ENCODE measurements at regions of chr4 and their contacts with region 1.

Region 1: DNA sequence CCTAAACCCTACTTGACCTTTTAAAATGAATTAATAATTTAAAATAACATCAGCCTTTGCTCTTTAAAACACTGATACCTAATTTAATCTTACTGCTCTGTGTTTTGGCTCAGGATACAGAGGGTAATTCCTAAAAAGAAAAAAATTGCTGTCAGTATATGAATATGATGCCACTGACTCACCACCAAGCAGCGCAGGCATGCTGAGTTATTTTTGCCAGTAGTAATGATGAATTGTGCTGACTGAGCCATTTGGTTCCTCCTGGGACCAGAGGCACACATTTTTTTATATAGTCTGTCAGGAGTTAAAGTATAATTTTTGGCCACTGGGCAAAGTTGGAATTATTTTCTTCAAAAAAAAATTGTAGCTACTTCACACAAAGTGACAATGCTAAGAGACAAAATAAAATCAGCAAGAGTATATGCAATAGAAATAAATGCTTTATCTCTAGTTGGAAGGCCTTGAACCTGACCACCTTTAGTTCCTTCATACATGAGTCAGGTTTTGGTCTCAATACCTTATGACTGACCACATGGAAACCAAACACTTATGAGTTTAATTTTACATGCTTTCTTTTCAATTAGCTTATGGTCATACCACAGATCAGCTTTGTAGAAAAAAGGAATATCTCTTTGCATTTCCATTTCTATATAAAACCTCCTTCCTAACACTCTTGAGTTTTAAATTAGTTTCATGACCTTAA is 115.1 kb downstream of the PPP3CA start:
- DNase-seq: peak; percentile 83
- H3K4me3 Mint-ChIP-seq: no peak overlapping the region
- H3K27ac Mint-ChIP-seq: peak overlapping the region; percentile 60
- H3K4me1 Mint-ChIP-seq: peaks cover 37% of the 10 kb centered on the region
- H3K27me3 Mint-ChIP-seq: no peaks in the 10 kb centered on the region
- CTCF ChIP-seq: no peak

Region 2: DNA sequence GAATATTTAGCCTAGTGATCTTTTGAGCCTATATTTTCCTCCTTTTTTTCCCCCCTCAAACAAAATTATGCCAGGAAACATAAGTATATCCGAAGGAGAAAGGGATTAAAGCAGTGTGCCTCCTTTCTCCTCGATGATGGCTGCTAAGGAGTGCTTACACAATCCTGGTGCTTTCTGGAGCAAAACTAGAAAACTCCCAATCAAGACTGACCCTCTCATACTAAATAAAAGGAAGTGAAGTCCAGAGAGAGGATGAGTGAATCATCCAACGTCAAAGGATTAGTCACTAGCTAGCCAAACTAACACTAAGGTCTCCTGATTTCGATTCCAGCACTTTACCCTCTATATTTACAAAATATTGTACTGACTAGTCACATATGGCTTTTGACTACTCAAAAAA is 31.7 kb before region 1 on chr4:
- CTCF ChIA-PET with region 1: no interaction called
- POLR2A ChIA-PET with region 1: interaction called, 11 read pairs
- intact Hi-C with region 1: no loop called
- DNase-seq: peak; percentile 90
- H3K4me3 Mint-ChIP-seq: peak overlapping the region; percentile 52
- H3K27ac Mint-ChIP-seq: peak overlapping the region; percentile 81
- H3K4me1 Mint-ChIP-seq: peaks cover 28% of the 10 kb centered on the region
- H3K27me3 Mint-ChIP-seq: no peaks in the 10 kb centered on the region
- CTCF ChIP-seq: no peak